Body of pancreas (tissue), 4 donors: ENCODE measurements at regions of chr7 and their contacts with region 1.

Region 1: DNA sequence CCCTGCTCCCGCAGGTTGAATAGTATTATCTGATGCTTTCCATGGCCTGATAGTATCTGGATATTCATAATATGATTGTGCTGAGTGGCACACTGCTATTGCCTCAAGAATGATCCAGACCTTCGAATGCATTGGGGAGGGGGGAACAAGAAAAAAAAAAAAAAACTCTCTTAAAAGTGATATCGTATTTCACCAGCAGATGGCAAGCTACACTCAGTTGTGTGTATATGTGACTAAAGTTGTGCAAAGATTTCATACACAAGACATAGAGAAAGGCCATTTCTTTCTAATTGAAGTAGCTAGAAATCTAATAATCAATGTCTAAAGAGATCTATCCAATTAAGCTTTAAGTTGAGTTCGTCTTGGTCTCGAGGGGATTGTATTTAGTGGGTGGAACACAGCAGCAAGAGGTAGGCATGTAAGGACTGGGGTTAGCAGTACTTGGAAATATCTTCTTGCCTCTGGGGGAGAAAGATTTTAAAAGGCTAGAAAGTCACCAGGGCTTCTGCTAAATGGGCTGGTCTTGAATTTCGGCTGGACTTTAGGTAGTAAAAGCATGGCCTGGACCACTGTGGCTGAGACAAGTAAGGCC is 15.3 kb downstream of the SFRP4 start:
- DNase-seq: peak in 1 of 4 donors; percentile 6
- ATAC-seq: peak; percentile 45
- H3K4me3 ChIP-seq: no peak overlapping the region
- H3K27ac ChIP-seq: no peak overlapping the region
- H3K4me1 ChIP-seq: peaks cover 3% of the 10 kb centered on the region
- H3K27me3 ChIP-seq: no peaks in the 10 kb centered on the region
- CTCF ChIP-seq: peak; percentile 6 to 81 (median 62)
- POLR2A ChIP-seq: no peak

Region 2: GRCh38 chr7:38229386-38229785 is 328.1 kb after region 1 on chr7:
- intact Hi-C with region 1: loop called (anchors 5 kb)
- DNase-seq: no peak
- ATAC-seq: no peak
- H3K4me3 ChIP-seq: no peak overlapping the region
- H3K27ac ChIP-seq: no peak overlapping the region
- H3K4me1 ChIP-seq: no peaks in the 10 kb centered on the region
- H3K27me3 ChIP-seq: no peaks in the 10 kb centered on the region
- CTCF ChIP-seq: no peak
- POLR2A ChIP-seq: no peak

Region 3: GRCh38 chr7:39062811-39063210 is 1161.5 kb after region 1 on chr7:
- intact Hi-C with region 1: no loop called
- DNase-seq: no peak
- ATAC-seq: no peak
- H3K4me3 ChIP-seq: no peak overlapping the region
- H3K27ac ChIP-seq: no peak overlapping the region
- H3K4me1 ChIP-seq: no peaks in the 10 kb centered on the region
- H3K27me3 ChIP-seq: no peaks in the 10 kb centered on the region
- CTCF ChIP-seq: no peak
- POLR2A ChIP-seq: no peak